Activated CD4-positive, alpha-beta memory T cell treated with anti-CD3 and anti-CD28 coated beads for 36 hours (primary cell): ENCODE measurements at regions of chr7 and their contacts with region 1.

Region 1: DNA sequence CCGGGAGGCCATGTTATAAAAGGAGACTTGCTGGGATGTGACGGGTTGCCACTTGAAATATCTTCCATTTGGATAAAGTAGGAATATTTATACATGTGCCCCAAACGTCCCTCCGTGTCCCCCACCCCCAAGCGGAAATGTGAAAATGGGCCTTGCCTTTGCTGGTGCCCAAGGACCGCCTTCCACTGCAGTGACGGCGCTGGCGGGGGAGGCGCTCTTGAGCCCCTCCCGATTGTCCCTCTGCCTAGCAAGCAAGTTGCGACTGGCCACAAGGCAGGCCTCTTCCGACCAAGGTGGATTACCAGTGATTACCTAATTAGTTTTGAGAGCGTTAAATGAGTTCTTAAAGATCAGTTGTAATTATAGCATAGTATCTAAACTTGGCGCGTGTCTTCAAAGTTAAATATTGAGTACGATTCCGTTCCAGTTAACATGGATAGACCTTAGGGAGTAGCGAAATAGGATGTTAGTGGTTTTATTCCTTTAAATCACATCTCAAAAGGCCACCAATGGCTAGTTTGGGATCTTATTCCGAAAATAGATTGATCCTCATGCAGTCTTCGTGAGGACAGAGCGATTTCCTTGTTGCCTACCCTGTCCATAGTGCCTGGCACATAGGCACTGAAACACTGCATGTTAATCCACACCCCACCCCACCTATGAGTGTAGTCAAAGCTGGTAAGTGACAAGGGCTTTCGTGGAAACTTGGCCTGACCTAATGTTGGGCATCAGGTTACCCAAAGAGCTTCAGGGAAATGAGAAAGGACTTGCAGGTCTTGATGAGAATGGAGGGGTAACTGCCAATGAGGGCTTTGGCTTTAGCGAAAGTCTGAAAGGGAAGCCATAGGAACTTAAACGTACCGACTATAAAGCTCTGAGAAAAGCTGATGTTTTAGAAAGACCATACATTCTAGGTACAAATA is 1.1 kb downstream of the PPIA start:
- DNase-seq: peak; percentile 91
- H3K4me3 Mint-ChIP-seq: peak overlapping the region; percentile 97
- H3K27ac Mint-ChIP-seq: peak overlapping the region; percentile 99
- H3K4me1 Mint-ChIP-seq: peaks cover 31% of the 10 kb centered on the region
- H3K27me3 Mint-ChIP-seq: no peaks in the 10 kb centered on the region

Region 2: GRCh38 chr7:44460325-44460724 is 337.3 kb before region 1 on chr7:
- CTCF ChIA-PET with region 1: no interaction called
- POLR2A ChIA-PET with region 1: interaction called, 4 read pairs
- intact Hi-C with region 1: loop called (anchors 2 kb)
- DNase-seq: peak; percentile 74
- H3K4me3 Mint-ChIP-seq: peak overlapping the region; percentile 34
- H3K27ac Mint-ChIP-seq: peak overlapping the region; percentile 64
- H3K4me1 Mint-ChIP-seq: peaks cover 70% of the 10 kb centered on the region
- H3K27me3 Mint-ChIP-seq: no peaks in the 10 kb centered on the region

Region 3: GRCh38 chr7:44581879-44582603 is 215.5 kb before region 1 on chr7 and contains the start of gene TMED4:
- CTCF ChIA-PET with region 1: no interaction called
- POLR2A ChIA-PET with region 1: interaction called, 9 read pairs
- intact Hi-C with region 1: loop called (anchors 2 kb)
- DNase-seq: peak; percentile 100
- H3K4me3 Mint-ChIP-seq: peak within 1 kb of the TSS; percentile 91
- H3K27ac Mint-ChIP-seq: peak within 1 kb of the TSS; percentile 91
- H3K4me1 Mint-ChIP-seq: peaks cover 29% of the 10 kb centered on the region
- H3K27me3 Mint-ChIP-seq: peaks cover 3% of the 10 kb centered on the region
- total RNA-seq, gene TMED4: 74.8 to 79.1 TPM

Region 4: DNA sequence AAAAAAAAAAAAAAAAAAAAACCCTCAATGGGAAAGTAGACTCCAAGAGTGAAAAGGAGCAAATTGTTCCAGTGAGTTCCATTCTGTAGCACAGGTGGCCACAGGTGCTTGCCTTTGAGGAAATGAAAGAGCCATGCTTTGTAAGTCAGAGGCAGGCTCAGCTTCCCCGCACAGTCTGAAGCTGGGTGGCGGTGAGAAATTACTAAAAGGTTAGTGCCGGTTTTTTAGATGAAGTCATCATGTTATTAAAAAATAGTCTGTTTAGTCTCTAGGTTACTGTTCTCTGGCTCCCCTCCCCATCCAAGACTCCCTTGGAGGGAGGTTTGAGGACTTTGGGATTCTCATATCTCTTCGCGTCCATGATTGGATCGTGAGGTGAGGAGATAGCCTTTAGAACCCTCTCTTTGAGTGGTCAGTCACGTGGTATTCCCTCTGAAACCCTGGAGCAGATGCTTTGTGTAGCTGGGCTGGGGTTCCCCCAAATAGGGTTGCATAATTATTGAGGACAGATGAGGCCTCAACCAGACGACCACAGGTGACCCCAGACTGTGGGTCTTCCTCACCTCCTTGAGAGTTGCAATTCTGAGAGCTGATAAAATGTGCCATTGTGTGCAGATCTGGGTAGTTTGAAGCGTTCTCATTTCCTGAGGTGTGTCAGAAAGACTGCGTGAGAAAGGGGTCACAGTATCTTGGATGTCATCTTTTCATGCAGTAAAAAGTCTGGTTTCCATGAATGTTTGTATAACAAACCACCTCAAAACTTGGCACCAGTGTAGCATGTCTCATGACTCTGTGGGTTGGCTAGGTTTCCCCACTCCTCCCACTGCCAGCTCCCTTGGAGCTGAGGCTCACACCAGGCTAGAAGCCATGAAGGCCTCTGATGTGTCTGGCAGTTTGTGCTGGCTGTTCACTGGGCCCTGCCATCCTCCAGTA is 164.1 kb before region 1 on chr7:
- CTCF ChIA-PET with region 1: no interaction called
- POLR2A ChIA-PET with region 1: interaction called, 22 read pairs
- intact Hi-C with region 1: loop called (anchors 1 kb)
- DNase-seq: peak; percentile 84
- H3K4me3 Mint-ChIP-seq: peak overlapping the region; percentile 53
- H3K27ac Mint-ChIP-seq: peak overlapping the region; percentile 96
- H3K4me1 Mint-ChIP-seq: peaks cover 97% of the 10 kb centered on the region
- H3K27me3 Mint-ChIP-seq: no peaks in the 10 kb centered on the region

Region 5: DNA sequence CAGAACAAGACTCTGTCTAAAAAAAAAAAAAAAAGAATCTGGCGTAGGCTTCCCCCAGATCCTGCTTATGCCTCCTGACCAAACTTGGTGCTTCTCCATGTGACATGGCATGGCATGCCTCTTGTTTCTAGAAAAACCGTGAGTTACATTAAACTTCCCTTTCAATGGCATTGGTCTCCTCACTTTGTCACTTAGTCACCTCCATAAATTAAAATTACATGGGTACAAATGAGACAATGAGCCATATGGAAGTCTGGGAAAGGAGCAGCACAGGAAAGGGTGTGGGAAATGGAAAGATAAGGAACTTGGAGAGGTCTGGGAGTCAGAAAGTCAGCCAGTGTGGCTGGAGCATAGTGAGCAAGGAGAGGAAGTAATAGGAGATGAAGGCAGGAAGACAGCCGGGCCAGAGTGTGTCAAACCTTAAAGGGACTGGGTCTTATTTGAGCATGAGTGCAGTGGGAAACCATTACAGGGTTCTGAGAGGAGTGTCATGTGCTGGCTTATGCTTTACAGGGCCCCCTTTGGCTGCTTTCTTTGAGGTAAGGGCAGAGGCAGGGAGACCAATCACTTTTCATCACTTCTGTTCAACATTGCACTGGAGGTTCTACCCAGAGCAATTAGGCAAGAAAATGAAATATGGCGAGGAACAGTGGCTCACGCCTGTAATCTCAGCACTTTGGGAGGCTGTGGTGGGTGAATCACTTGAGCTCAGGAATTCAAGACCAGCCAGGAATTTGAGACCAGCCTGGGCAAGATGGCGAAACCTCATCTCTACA is 70.2 kb before region 1 on chr7:
- CTCF ChIA-PET with region 1: no interaction called
- POLR2A ChIA-PET with region 1: no interaction called
- intact Hi-C with region 1: no loop called
- DNase-seq: no peak
- H3K4me3 Mint-ChIP-seq: no peak overlapping the region
- H3K27ac Mint-ChIP-seq: no peak overlapping the region
- H3K4me1 Mint-ChIP-seq: no peaks in the 10 kb centered on the region
- H3K27me3 Mint-ChIP-seq: no peaks in the 10 kb centered on the region

Region 6: DNA sequence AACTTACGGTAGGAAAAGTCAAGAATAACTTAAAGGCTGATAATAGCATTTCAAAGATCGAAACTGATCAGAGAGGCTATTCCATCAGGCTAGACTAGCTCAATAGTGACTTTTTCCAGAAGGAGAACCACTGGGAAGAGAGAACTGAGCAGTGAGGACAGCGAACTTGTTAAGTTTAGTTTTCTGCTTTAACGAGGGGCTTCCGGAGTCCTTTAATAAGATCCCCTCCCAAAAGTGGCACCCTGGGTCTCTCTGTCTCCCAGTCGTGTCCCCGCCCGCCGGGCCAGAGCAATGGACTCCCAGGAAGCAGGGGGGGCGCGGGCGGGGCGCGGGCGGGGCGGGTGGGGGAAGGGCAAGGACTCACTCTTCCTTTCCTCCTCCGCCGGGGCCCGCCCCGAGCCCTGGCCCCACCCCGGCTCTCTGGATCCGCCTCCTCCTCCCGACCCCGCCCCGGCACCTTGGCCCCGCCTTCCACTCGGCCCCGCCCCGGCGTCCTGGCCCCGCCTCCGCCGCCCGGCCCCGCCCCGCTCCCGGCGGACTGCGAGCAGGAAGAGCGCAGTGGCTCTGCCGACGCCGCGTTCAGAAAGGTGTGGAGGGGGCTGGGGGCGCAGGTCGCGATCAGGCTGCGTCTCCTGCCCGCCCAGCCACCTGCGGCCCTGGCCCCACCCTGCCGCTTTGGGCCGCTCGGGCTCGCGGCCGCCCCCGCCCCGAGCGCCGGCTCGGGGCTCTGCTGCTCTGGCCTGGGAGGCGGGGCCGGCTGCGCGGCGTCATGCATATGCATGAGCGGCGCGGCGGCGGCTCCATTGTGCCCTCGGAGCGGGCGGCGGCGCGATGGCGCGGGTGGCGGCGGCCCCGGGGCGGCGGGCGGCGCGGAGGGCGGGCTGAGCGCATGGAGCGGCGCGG is 49.3 kb before region 1 on chr7 and contains the start of gene ZMIZ2:
- CTCF ChIA-PET with region 1: no interaction called
- POLR2A ChIA-PET with region 1: interaction called, 8 read pairs
- intact Hi-C with region 1: loop called (anchors 1 kb)
- DNase-seq: peak; percentile 93
- H3K4me3 Mint-ChIP-seq: peak within 1 kb of the TSS; percentile 81
- H3K27ac Mint-ChIP-seq: peak within 1 kb of the TSS; percentile 87
- H3K4me1 Mint-ChIP-seq: peaks cover 39% of the 10 kb centered on the region
- H3K27me3 Mint-ChIP-seq: no peaks in the 10 kb centered on the region
- total RNA-seq, gene ZMIZ2: 84.7 to 92.3 TPM

Region 7: GRCh38 chr7:44944821-44945220 is 147.2 kb after region 1 on chr7:
- CTCF ChIA-PET with region 1: no interaction called
- POLR2A ChIA-PET with region 1: no interaction called
- intact Hi-C with region 1: no loop called
- DNase-seq: no peak
- H3K4me3 Mint-ChIP-seq: no peak overlapping the region
- H3K27ac Mint-ChIP-seq: no peak overlapping the region
- H3K4me1 Mint-ChIP-seq: no peaks in the 10 kb centered on the region
- H3K27me3 Mint-ChIP-seq: peaks cover 6% of the 10 kb centered on the region